PC-9 (cell line): ENCODE measurements at regions of chr1 and their contacts with region 1.

Region 1: GRCh38 chr1:119613769-119614720 is 34.0 kb downstream of the ZNF697 start:
- DNase-seq: peak; percentile 77 to 88
- H3K4me3 ChIP-seq: no peak overlapping the region
- H3K27ac ChIP-seq: no peak overlapping the region
- H3K4me1 ChIP-seq: no peaks in the 10 kb centered on the region
- H3K27me3 ChIP-seq: no peaks in the 10 kb centered on the region
- CTCF ChIP-seq: peak; percentile 98

Region 2: GRCh38 chr1:119647734-119648619 is 33.9 kb after region 1 on chr1 and contains the start of gene ZNF697:
- CTCF ChIA-PET with region 1: no interaction called
- POLR2A ChIA-PET with region 1: no interaction called
- intact Hi-C with region 1: loop called (anchors 2 kb)
- DNase-seq: peak; percentile 97 to 98
- H3K4me3 ChIP-seq: peak within 1 kb of the TSS; percentile 99
- H3K27ac ChIP-seq: peak within 1 kb of the TSS; percentile 43
- H3K4me1 ChIP-seq: peaks cover 26% of the 10 kb centered on the region
- H3K27me3 ChIP-seq: no peaks in the 10 kb centered on the region
- CTCF ChIP-seq: peak; percentile 45; the same call in 1 of the 2 replicates
- total RNA-seq, gene ZNF697: 3.6 and 4.1 TPM in 2 replicates

Region 3: GRCh38 chr1:119667173-119667572 is 53.1 kb after region 1 on chr1:
- CTCF ChIA-PET with region 1: no interaction called
- POLR2A ChIA-PET with region 1: no interaction called
- intact Hi-C with region 1: no loop called
- DNase-seq: no peak
- H3K4me3 ChIP-seq: no peak overlapping the region
- H3K27ac ChIP-seq: no peak overlapping the region
- H3K4me1 ChIP-seq: peaks cover 8% of the 10 kb centered on the region
- H3K27me3 ChIP-seq: no peaks in the 10 kb centered on the region
- CTCF ChIP-seq: no peak

Region 4: GRCh38 chr1:119711804-119712341 is 97.8 kb after region 1 on chr1 and contains the start of gene PHGDH:
- CTCF ChIA-PET with region 1: no interaction called
- POLR2A ChIA-PET with region 1: no interaction called
- intact Hi-C with region 1: loop called (anchors 1 kb)
- DNase-seq: peak; percentile 78 to 89
- H3K4me3 ChIP-seq: peak within 1 kb of the TSS; percentile 93
- H3K27ac ChIP-seq: peak within 1 kb of the TSS; percentile 85
- H3K4me1 ChIP-seq: peaks cover 34% of the 10 kb centered on the region
- H3K27me3 ChIP-seq: no peaks in the 10 kb centered on the region
- CTCF ChIP-seq: no peak
- total RNA-seq, gene PHGDH: 373 and 569 TPM in 2 replicates

Region 5: DNA sequence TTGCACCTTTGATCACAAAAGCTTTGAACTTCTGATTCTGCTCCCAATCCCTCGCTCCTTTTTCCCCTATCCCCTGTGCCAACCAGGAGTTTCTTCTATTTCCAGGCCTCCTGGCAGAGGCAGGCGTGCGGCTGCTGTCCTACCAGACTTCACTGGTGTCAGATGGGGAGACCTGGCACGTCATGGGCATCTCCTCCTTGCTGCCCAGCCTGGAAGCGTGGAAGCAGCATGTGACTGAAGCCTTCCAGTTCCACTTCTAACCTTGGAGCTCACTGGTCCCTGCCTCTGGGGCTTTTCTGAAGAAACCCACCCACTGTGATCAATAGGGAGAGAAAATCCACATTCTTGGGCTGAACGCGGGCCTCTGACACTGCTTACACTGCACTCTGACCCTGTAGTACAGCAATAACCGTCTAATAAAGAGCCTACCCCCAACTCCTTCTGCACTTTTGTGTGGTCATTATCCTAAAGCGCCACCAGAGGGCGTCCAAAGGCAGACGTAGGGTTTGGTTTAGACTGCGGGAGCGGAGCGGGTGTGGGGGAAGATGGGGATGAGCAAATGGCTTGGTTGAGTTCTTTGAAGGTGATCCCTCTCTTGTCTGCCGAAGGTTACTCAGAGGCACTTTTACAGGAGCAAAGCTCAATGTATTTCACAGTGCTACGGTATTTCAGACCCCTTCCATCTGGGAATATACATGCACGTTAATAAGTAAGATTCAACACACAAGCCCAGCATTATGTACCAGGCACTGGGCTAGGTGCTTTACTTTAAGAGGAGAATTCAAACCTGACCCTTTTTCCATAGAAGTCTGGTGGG is 129.9 kb after region 1 on chr1:
- CTCF ChIA-PET with region 1: interaction called, 3 read pairs
- POLR2A ChIA-PET with region 1: no interaction called
- intact Hi-C with region 1: loop called (anchors 5 kb)
- DNase-seq: peak; percentile 55 to 58
- H3K4me3 ChIP-seq: no peak overlapping the region
- H3K27ac ChIP-seq: no peak overlapping the region
- H3K4me1 ChIP-seq: no peaks in the 10 kb centered on the region
- H3K27me3 ChIP-seq: no peaks in the 10 kb centered on the region
- CTCF ChIP-seq: peak; percentile 99

Region 6: DNA sequence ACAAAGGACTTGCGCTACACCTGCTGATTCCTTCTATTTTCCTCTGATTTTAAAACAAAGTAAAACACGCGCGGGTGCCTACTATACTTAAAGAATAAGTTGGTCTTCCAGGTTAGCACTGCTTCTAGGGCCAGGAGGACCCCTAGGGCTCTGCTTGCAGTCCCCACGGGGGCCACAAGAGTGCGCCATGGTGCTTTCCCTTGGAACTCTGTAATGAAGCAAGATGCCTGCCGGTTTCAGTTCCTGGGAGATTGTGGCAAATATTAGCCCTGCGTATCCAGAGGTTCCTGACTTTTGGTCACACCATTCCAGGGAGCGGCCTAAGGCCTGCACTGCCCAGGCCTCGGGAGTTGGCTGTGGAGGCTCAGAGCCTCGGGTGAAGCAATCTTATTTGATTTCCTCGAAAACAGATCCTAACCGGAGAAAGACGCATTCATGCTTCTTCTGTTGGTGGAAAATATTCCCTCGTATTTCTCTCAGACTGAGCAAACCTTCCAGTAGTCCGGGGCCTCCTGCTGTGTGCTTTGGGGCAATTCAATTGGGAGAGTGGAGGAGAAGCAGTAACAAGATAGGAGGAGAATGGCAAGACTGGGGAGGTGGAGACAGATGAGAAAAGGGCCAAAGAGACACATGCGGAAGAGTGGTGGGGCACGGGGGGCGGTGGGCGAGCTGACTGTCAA is 257.0 kb after region 1 on chr1:
- CTCF ChIA-PET with region 1: interaction called, 5 read pairs
- POLR2A ChIA-PET with region 1: no interaction called
- intact Hi-C with region 1: loop called (anchors 5 kb)
- DNase-seq: peak; percentile 61 to 86
- H3K4me3 ChIP-seq: peak overlapping the region; percentile 21; the same call in 1 of the 2 replicates
- H3K27ac ChIP-seq: no peak overlapping the region
- H3K4me1 ChIP-seq: no peaks in the 10 kb centered on the region
- H3K27me3 ChIP-seq: no peaks in the 10 kb centered on the region
- CTCF ChIP-seq: peak; percentile 99